K562 (cell line): ENCODE measurements at regions of chr6 and their contacts with region 1.

Region 1: GRCh38 chr6:26312501-26313390 is 52.3 kb upstream of the BTN3A2 start:
- DNase-seq: peak; percentile 69 to 95 (median 72)
- ATAC-seq: peak; percentile 76
- H3K4me3 ChIP-seq: peak overlapping the region; percentile 53
- H3K27ac ChIP-seq: peak overlapping the region; percentile 66
- H3K4me1 ChIP-seq: peaks cover 4 to 34% of the 10 kb centered on the region in 2 experiments
- H3K27me3 ChIP-seq: no peaks in the 10 kb centered on the region
- CTCF ChIP-seq: no peak; a peak in 1 of 6 replicates
- EP300 ChIP-seq: peak; percentile 65
- POLR2A ChIP-seq: no peak
- RAD21 ChIP-seq: peak in 1 of 2 experiments; percentile 45; a peak in 2 of 4 replicates

Region 2: DNA sequence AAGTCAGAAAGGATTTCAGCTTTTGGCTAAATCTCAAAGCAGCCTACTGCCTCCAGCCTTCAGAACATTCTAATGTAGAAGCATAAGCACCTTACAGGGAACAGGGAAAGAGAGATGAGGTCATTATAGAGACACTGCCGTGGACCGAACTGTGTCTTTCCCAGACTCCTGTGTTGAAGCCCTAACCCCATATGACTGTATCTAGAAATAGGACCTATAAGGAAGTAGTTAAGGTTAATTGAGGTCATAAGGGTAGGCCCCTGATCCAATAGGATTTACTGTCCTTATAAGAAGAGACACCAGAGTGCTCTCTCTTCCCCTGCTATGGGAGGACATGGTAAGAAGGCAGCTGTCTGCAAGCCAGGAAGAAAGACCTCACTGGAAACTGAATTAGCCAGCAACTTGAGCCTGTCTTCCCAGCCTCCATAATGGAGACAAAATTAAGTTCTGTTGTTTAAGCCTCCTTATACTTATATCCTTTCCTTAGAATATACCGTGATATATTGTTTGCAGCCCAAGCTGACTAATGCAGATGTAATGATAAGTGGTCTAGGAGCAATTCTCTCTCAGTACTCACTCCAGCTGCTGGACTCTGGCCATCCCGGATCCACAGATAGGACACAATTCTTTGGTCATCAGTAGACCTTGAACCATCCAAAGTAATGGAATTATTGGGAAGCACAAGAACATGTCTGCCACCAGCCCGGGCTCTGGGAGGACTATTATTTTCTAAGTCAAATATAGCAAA is 1746.6 kb before region 1 on chr6:
- CTCF ChIA-PET with region 1: no interaction called
- POLR2A ChIA-PET with region 1: no interaction called
- in situ Hi-C with region 1: no loop called
- intact Hi-C with region 1: no loop called
- DNase-seq: no peak
- ATAC-seq: no peak
- H3K4me3 ChIP-seq: no peak overlapping the region
- H3K27ac ChIP-seq: no peak overlapping the region
- H3K4me1 ChIP-seq: no peaks in the 10 kb centered on the region
- H3K27me3 ChIP-seq: peaks cover 45 to 57% of the 10 kb centered on the region in 2 experiments
- CTCF ChIP-seq: no peak
- EP300 ChIP-seq: no peak
- POLR2A ChIP-seq: no peak
- RAD21 ChIP-seq: no peak

Region 3: GRCh38 chr6:26087284-26088115 is 225.2 kb before region 1 on chr6 and contains the start of gene HFE:
- CTCF ChIA-PET with region 1: no interaction called
- POLR2A ChIA-PET with region 1: no interaction called
- in situ Hi-C with region 1: no loop called
- intact Hi-C with region 1: no loop called
- DNase-seq: peak; percentile 59 to 75 (median 66)
- ATAC-seq: peak; percentile 92
- H3K4me3 ChIP-seq: peak within 1 kb of the TSS; percentile 56
- H3K27ac ChIP-seq: peak within 1 kb of the TSS; percentile 67
- H3K4me1 ChIP-seq: peaks cover 9% of the 10 kb centered on the region in 2 experiments; a peak in 4 of 5 replicates
- H3K27me3 ChIP-seq: no peaks in the 10 kb centered on the region
- CTCF ChIP-seq: peak in 1 of 3 experiments; percentile 2; a peak in 1 of 6 replicates
- EP300 ChIP-seq: no peak
- POLR2A ChIP-seq: peak; percentile 56; the same call in 1 of the 2 replicates
- RAD21 ChIP-seq: 0 out of 4 replicates have a peak, but pooled peaks of 1 of the 2 experiments have one; percentile 1
- polyA plus RNA-seq, gene HFE: 0.17 to 0.31 TPM

Region 4: GRCh38 chr6:26175428-26176181 is 137.1 kb before region 1 on chr6:
- CTCF ChIA-PET with region 1: no interaction called
- POLR2A ChIA-PET with region 1: interaction called, 4 read pairs
- in situ Hi-C with region 1: no loop called
- intact Hi-C with region 1: loop called (anchors 5 kb)
- DNase-seq: peak; percentile 60 to 88 (median 71)
- ATAC-seq: peak; percentile 41
- H3K4me3 ChIP-seq: no peak overlapping the region
- H3K27ac ChIP-seq: no peak overlapping the region
- H3K4me1 ChIP-seq: peaks cover 14% of the 10 kb centered on the region in 2 experiments
- H3K27me3 ChIP-seq: no peaks in the 10 kb centered on the region
- CTCF ChIP-seq: peak; percentile 59 to 87 (median 77)
- EP300 ChIP-seq: no peak; the same call in 1 of the 2 replicates
- POLR2A ChIP-seq: no peak
- RAD21 ChIP-seq: peak; percentile 87 to 88

Region 5: DNA sequence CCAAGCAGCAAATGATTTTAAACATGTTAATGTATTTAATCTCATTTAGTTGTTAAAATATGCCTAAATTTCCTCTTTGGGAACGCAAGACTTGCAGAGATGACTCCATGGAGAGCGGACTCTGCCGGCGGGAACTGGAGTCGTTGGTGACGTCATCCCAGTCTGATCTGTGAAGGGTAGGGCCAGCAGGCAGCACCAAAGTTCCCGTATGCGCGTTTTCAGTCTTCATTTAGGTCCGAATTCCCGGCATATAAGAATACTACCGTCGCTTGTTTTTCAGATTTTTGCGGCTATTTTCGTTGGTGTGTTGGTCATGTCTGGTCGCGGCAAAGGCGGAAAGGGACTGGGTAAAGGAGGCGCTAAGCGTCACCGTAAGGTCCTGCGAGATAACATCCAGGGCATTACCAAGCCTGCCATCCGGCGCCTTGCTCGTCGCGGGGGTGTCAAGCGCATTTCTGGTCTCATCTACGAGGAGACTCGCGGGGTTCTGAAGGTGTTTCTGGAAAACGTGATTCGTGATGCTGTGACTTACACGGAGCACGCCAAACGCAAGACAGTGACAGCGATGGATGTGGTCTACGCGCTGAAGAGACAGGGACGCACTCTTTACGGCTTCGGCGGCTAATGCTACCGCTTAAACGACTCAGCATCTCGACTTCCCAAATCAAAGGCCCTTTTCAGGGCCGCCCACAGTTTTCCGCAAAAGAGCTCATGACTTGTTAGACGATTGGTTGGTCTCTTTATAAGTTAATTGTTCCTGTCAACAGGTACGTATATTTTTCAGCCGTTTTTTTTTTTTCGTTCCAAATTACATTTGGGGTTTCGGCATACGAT is 108.2 kb before region 1 on chr6:
- CTCF ChIA-PET with region 1: no interaction called
- POLR2A ChIA-PET with region 1: interaction called, 63 read pairs
- in situ Hi-C with region 1: no loop called
- intact Hi-C with region 1: no loop called
- DNase-seq: peak; percentile 85 to 99 (median 92)
- ATAC-seq: peak; percentile 67
- H3K4me3 ChIP-seq: peak overlapping the region; percentile 57
- H3K27ac ChIP-seq: peak overlapping the region; percentile 99
- H3K4me1 ChIP-seq: peaks cover 9 to 21% of the 10 kb centered on the region in 2 experiments; a peak in 4 of 5 replicates
- H3K27me3 ChIP-seq: no peaks in the 10 kb centered on the region
- CTCF ChIP-seq: peak in 2 of 3 experiments; percentile 67 to 70; a peak in 5 of 6 replicates
- EP300 ChIP-seq: peak; percentile 95
- POLR2A ChIP-seq: peak; percentile 100
- RAD21 ChIP-seq: peak in 1 of 2 experiments; percentile 29; a peak in 2 of 4 replicates

Region 6: GRCh38 chr6:26234421-26235296 is 78.1 kb before region 1 on chr6:
- CTCF ChIA-PET with region 1: no interaction called
- POLR2A ChIA-PET with region 1: interaction called, 10 read pairs
- in situ Hi-C with region 1: no loop called
- intact Hi-C with region 1: no loop called
- DNase-seq: peak; percentile 71 to 93 (median 83)
- ATAC-seq: peak; percentile 89
- H3K4me3 ChIP-seq: peak overlapping the region; percentile 40
- H3K27ac ChIP-seq: peak overlapping the region; percentile 73
- H3K4me1 ChIP-seq: peaks cover 16 to 20% of the 10 kb centered on the region in 2 experiments; a peak in 4 of 5 replicates
- H3K27me3 ChIP-seq: no peaks in the 10 kb centered on the region
- CTCF ChIP-seq: no peak
- EP300 ChIP-seq: no peak; the same call in 1 of the 2 replicates
- POLR2A ChIP-seq: peak; percentile 99
- RAD21 ChIP-seq: no peak; a peak in 1 of 4 replicates

Region 7: DNA sequence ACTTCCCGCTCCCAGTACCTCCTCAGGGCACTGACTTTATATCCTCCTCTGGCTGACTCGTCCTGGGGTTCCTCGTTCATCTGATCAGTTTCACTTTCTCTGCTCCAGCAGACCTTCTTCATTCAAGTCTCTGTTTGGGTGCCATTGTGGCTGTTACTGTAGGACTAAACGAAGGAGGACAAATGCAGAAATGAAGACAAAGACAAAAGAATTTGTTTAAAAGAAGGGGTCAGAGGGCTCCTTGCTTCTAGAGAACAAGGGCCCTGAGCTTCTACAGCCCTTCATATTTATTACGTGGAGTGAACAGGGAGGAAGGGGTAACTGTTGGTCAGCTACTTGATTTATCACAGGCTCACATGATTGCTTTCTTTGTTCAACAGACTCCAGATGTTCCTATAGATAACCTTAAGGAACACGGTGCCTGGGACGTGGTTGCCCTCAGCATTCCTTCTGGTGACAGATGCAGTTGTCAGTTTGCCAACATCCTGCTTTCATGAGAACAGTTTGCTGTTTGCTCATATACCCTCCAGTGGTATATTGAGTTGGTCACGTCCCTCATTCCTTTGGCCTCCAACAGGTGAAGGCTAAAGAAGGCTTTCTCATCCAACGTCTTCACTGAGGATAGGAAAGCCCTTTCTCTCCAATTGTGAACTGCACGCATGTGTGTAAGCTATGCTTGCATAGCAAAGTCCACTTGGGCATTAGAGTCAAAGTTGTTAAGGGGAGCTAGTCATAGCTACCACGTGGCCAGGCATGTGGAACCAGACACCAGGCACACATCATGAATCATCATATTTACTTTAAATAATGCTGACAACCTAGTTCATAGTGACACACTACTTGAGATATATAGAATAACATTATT is 16.8 kb before region 1 on chr6:
- CTCF ChIA-PET with region 1: no interaction called
- POLR2A ChIA-PET with region 1: interaction called, 20 read pairs
- in situ Hi-C with region 1: no loop called
- intact Hi-C with region 1: no loop called
- DNase-seq: peak; percentile 75 to 95 (median 79)
- ATAC-seq: peak; percentile 63
- H3K4me3 ChIP-seq: no peak overlapping the region
- H3K27ac ChIP-seq: peak overlapping the region; percentile 86
- H3K4me1 ChIP-seq: peaks cover 0 to 45% of the 10 kb centered on the region in 2 experiments; a peak in 4 of 5 replicates
- H3K27me3 ChIP-seq: no peaks in the 10 kb centered on the region
- CTCF ChIP-seq: no peak
- EP300 ChIP-seq: peak; percentile 97
- POLR2A ChIP-seq: no peak
- RAD21 ChIP-seq: peak; percentile 15 to 46; a peak in 2 of 4 replicates

Region 8: DNA sequence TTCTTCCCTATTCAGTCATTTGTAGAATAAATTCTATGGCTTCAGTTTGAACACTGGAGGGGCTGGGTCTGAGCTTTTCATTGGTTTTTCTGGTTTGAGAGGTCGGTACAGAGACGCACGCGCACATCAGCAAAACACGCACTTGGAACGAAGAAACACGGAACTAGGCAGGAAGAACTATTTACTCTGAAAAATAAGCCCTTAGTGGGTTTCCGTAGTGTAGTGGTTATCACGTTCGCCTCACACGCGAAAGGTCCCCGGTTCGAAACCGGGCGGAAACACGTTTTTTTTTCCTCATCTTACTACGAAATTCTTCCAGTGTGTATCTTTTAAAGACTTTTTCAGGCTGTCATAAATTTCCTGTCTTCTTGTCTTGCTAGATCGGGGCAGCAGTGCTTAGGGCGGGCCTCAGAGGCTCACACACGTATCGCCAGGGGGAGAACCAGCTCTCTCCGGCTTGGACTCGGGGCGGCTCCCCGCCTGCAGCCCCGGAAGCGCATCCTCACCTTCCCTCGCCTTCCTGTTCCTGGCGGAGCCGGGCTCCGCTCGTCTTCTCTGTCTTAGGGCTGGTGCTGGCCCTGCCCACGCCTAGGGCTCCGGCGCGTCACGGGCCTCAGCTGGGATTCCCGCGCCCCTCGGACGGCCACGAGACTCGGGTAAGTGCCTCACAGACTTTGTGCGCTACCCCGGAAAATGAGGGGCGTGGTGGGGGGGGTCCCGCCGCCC is 225.3 kb after region 1 on chr6 and contains the start of gene HMGN4:
- CTCF ChIA-PET with region 1: no interaction called
- POLR2A ChIA-PET with region 1: interaction called, 3 read pairs
- in situ Hi-C with region 1: no loop called
- intact Hi-C with region 1: loop called (anchors 5 kb)
- DNase-seq: peak; percentile 90 to 95 (median 91)
- ATAC-seq: peak; percentile 91
- H3K4me3 ChIP-seq: peak within 1 kb of the TSS; percentile 67
- H3K27ac ChIP-seq: peak within 1 kb of the TSS; percentile 86
- H3K4me1 ChIP-seq: peaks cover 14 to 22% of the 10 kb centered on the region in 2 experiments
- H3K27me3 ChIP-seq: no peaks in the 10 kb centered on the region
- CTCF ChIP-seq: peak in 2 of 3 experiments; percentile 25; a peak in 1 of 6 replicates
- EP300 ChIP-seq: peak; percentile 72
- POLR2A ChIP-seq: peak; percentile 88
- RAD21 ChIP-seq: peak in 1 of 2 experiments; percentile 48; a peak in 3 of 4 replicates
- polyA plus RNA-seq, gene HMGN4: 35.4 to 41.1 TPM

Region 9: GRCh38 chr6:26553635-26554446 is 241.1 kb after region 1 on chr6:
- CTCF ChIA-PET with region 1: no interaction called
- POLR2A ChIA-PET with region 1: interaction called, 4 read pairs
- in situ Hi-C with region 1: no loop called
- intact Hi-C with region 1: loop called (anchors 2 kb)
- DNase-seq: peak; percentile 62 to 93 (median 72)
- ATAC-seq: peak; percentile 66
- H3K4me3 ChIP-seq: peak overlapping the region; percentile 51
- H3K27ac ChIP-seq: peak overlapping the region; percentile 74
- H3K4me1 ChIP-seq: peaks cover 5 to 20% of the 10 kb centered on the region in 2 experiments; a peak in 4 of 5 replicates
- H3K27me3 ChIP-seq: no peaks in the 10 kb centered on the region
- CTCF ChIP-seq: no peak
- EP300 ChIP-seq: peak; percentile 73; the same call in 1 of the 2 replicates
- POLR2A ChIP-seq: no peak
- RAD21 ChIP-seq: no peak; a peak in 1 of 4 replicates

Region 10: GRCh38 chr6:27332692-27333641 is 1020.2 kb after region 1 on chr6:
- CTCF ChIA-PET with region 1: no interaction called
- POLR2A ChIA-PET with region 1: no interaction called
- in situ Hi-C with region 1: no loop called
- intact Hi-C with region 1: no loop called
- DNase-seq: peak; percentile 67 to 91 (median 78)
- ATAC-seq: peak; percentile 92
- H3K4me3 ChIP-seq: peak overlapping the region; percentile 64
- H3K27ac ChIP-seq: peak overlapping the region; percentile 82
- H3K4me1 ChIP-seq: peaks cover 0 to 5% of the 10 kb centered on the region in 2 experiments; a peak in 2 of 5 replicates
- H3K27me3 ChIP-seq: no peaks in the 10 kb centered on the region
- CTCF ChIP-seq: peak in 1 of 3 experiments; percentile 18; a peak in 1 of 6 replicates
- EP300 ChIP-seq: peak; percentile 71
- POLR2A ChIP-seq: no peak
- RAD21 ChIP-seq: no peak; a peak in 2 of 4 replicates